HEK293 (cell line): ENCODE measurements at regions of chr18 and their contacts with region 1.

Region 1: GRCh38 chr18:34122724-34123334 is 101.9 kb downstream of the NOL4 start:
- H3K4me3 ChIP-seq: no peak overlapping the region
- H3K27ac ChIP-seq: no peak overlapping the region
- H3K4me1 ChIP-seq: peaks cover 11% of the 10 kb centered on the region
- CTCF ChIP-seq: peak; percentile 64; the same call in 1 of the 2 replicates

Region 2: DNA sequence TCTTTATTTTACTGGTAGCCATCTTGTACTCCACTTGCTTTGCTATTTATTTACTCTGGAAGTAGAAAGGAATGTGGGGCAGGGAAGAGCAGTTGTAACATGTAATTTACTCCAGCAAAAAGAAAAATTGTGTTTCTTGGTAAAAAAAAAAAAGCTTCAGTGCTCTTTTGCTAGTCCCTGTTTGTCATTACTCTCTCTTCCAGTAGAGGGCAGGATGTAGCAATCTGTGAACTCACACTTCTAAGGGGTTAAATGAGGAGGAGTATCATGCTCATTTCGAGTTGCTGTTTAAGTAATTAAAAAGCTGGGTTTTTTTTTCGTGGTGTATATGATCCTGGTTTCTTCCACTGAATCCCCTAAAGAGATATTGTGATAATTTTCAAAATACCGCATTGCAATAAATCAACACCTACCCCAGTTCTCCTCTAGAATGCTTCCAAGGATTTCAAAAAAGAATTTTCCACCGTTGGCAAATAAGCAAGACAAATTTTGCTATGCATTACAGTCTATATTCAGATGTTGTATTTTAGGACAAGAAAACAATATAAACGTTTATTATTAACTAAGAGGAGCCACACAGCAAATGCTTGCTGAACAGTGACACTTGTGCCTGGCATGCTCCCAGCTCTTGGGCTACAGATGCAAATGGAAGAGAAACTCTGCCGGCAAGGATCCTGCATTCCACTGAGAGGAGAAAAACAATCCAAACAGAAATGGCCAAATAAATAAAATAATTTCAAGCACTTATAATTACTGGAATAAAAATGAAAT is 283.2 kb before region 1 on chr18:
- CTCF ChIA-PET with region 1: interaction called, 53 read pairs
- POLR2A ChIA-PET with region 1: no interaction called
- H3K4me3 ChIP-seq: no peak overlapping the region
- H3K27ac ChIP-seq: no peak overlapping the region
- H3K4me1 ChIP-seq: peaks cover 5% of the 10 kb centered on the region; the same call in 1 of the 2 replicates
- CTCF ChIP-seq: peak; percentile 65

Region 3: GRCh38 chr18:33937270-33937816 is 185.5 kb before region 1 on chr18:
- CTCF ChIA-PET with region 1: no interaction called
- POLR2A ChIA-PET with region 1: no interaction called
- H3K4me3 ChIP-seq: no peak overlapping the region
- H3K27ac ChIP-seq: no peak overlapping the region
- H3K4me1 ChIP-seq: no peaks in the 10 kb centered on the region
- CTCF ChIP-seq: no peak

Region 4: GRCh38 chr18:34196256-34196655 is 73.4 kb after region 1 on chr18:
- CTCF ChIA-PET with region 1: interaction called, 12 read pairs
- POLR2A ChIA-PET with region 1: no interaction called
- H3K4me3 ChIP-seq: no peak overlapping the region
- H3K27ac ChIP-seq: no peak overlapping the region
- H3K4me1 ChIP-seq: no peaks in the 10 kb centered on the region
- CTCF ChIP-seq: no peak

Region 5: GRCh38 chr18:34224423-34225217 is 101.8 kb after region 1 on chr18 and contains the start of gene NOL4:
- CTCF ChIA-PET with region 1: interaction called, 23 read pairs
- POLR2A ChIA-PET with region 1: interaction called, 5 read pairs
- H3K4me3 ChIP-seq: peak within 1 kb of the TSS; percentile 70
- H3K27ac ChIP-seq: peak within 1 kb of the TSS; percentile 52; the same call in 1 of the 2 replicates
- H3K4me1 ChIP-seq: no peaks in the 10 kb centered on the region
- CTCF ChIP-seq: peak; percentile 90

Region 6: GRCh38 chr18:34314847-34315246 is 192.0 kb after region 1 on chr18:
- CTCF ChIA-PET with region 1: interaction called, 127 read pairs
- POLR2A ChIA-PET with region 1: no interaction called
- H3K4me3 ChIP-seq: no peak overlapping the region
- H3K27ac ChIP-seq: no peak overlapping the region
- H3K4me1 ChIP-seq: no peaks in the 10 kb centered on the region
- CTCF ChIP-seq: no peak

Region 7: DNA sequence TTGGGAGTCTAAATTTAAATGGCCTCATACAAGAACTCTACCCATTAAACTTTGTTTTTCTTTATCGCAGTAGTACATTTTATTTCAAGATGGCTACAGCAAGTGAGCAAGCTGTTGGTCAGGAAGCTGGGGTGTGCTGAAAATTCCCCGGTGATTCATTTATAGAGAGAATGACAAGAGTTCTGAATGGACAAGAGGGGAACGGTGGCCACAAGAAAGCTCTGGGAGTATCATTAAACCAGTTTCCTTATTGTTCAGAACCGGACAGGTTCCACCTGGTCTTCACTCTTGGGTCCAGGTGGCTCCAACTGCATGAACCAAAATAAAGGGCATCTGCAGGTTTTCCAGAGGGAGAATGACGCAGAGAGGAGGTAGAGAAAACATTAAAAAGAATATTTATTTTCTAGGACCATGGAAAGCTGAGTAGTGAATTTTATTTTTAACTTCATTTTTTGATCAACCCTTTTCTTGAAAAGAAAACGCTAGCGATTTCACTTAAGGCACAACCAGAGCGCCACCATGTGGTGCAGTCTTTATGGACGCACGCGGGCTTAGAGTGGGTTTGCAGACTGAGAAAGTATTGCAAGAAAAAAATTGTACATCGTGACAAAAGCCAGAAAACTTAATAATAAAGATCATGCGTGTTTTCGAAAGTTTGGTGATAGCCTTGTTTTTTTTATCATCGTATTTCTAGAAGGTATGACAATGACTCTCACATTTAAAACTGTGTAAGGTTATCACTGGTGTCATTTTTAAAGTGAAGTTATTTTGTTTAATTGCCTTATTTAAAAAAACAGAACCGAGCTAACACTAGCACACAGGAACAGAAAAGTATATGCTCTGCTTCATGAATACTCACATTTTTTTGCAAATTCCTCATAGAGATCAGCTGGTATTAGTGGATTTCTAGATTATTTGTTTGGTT is 199.8 kb after region 1 on chr18:
- CTCF ChIA-PET with region 1: interaction called, 127 read pairs
- POLR2A ChIA-PET with region 1: interaction called, 5 read pairs
- H3K4me3 ChIP-seq: no peak overlapping the region
- H3K27ac ChIP-seq: no peak overlapping the region
- H3K4me1 ChIP-seq: no peaks in the 10 kb centered on the region
- CTCF ChIP-seq: 0 out of 2 replicates have a peak, but pooled peaks have one; percentile 39

Region 8: GRCh38 chr18:34509879-34510586 is 387.2 kb after region 1 on chr18:
- CTCF ChIA-PET with region 1: no interaction called
- POLR2A ChIA-PET with region 1: no interaction called
- H3K4me3 ChIP-seq: no peak overlapping the region
- H3K27ac ChIP-seq: no peak overlapping the region
- H3K4me1 ChIP-seq: no peaks in the 10 kb centered on the region
- CTCF ChIP-seq: no peak